Breast epithelium (tissue), 4 donors: ENCODE measurements at regions of chr21 and their contacts with region 1.

Region 1: GRCh38 chr21:39527664-39528381 is 76.1 kb downstream of the SH3BGR start:
- DNase-seq: no peak
- H3K4me3 ChIP-seq: no peak overlapping the region
- H3K27ac ChIP-seq: no peak overlapping the region
- H3K4me1 ChIP-seq: no peaks in the 10 kb centered on the region
- H3K27me3 ChIP-seq: no peaks in the 10 kb centered on the region
- CTCF ChIP-seq: no peak
- POLR2A ChIP-seq: no peak

Region 2: GRCh38 chr21:39686646-39687468 is 159.0 kb after region 1 on chr21:
- intact Hi-C with region 1: no loop called
- DNase-seq: no peak
- H3K4me3 ChIP-seq: no peak overlapping the region
- H3K27ac ChIP-seq: no peak overlapping the region
- H3K4me1 ChIP-seq: no peaks in the 10 kb centered on the region
- H3K27me3 ChIP-seq: no peaks in the 10 kb centered on the region
- CTCF ChIP-seq: no peak
- POLR2A ChIP-seq: no peak

Region 3: DNA sequence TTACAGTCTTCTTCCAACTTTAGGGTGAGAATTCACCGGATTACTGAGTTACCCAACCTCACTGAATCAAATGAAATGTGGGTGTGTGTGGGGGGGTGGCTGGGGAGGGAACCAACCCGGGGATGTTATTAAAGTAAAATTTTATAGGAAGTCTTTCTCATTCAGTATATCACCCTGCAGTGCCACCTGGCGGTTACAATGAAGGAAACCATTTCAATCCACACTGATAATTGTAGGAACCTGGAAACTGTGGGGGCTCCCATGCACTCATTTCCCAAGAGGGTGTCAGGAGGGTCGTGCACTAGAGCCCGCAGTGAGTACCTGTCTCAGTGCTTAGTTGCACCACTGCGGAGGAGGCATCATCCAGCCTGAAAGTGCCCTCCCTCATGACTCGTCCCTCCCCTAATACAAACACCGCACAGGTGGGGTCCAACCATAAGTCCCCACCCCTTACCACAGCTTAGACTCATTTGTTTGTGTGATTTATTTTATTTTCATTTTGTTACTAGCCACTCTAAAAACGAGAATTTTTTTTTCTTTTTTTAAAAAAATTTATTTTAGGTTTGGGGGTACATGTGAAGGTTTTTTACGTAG is 188.1 kb after region 1 on chr21:
- intact Hi-C with region 1: loop called (anchors 10 kb)
- DNase-seq: peak in 1 of 2 donors; percentile 30
- H3K4me3 ChIP-seq: no peak overlapping the region
- H3K27ac ChIP-seq: no peak overlapping the region
- H3K4me1 ChIP-seq: no peaks in the 10 kb centered on the region
- H3K27me3 ChIP-seq: no peaks in the 10 kb centered on the region
- CTCF ChIP-seq: peak; percentile 33 to 72 (median 52)
- POLR2A ChIP-seq: no peak

Region 4: GRCh38 chr21:41511858-41512257 is 1984.0 kb after region 1 on chr21:
- intact Hi-C with region 1: loop called (anchors 10 kb)
- DNase-seq: no peak
- H3K4me3 ChIP-seq: no peak overlapping the region
- H3K27ac ChIP-seq: no peak overlapping the region
- H3K4me1 ChIP-seq: no peaks in the 10 kb centered on the region
- H3K27me3 ChIP-seq: peaks cover 0 to 7% of the 10 kb centered on the region in 2 donors
- CTCF ChIP-seq: no peak
- POLR2A ChIP-seq: no peak